MCF 10A (cell line): ENCODE measurements at regions of chr20 and their contacts with region 1.

Region 1: GRCh38 chr20:60057123-60057801 is 99.0 kb downstream of the CDH26 start:
- DNase-seq: peak; percentile 73
- H3K4me3 Mint-ChIP-seq: no peak overlapping the region
- H3K27ac Mint-ChIP-seq: no peak overlapping the region
- H3K4me1 Mint-ChIP-seq: peaks cover 24% of the 10 kb centered on the region
- H3K27me3 Mint-ChIP-seq: no peaks in the 10 kb centered on the region
- CTCF ChIP-seq: peak; percentile 83

Region 2: GRCh38 chr20:59857966-59858365 is 199.3 kb before region 1 on chr20:
- CTCF ChIA-PET with region 1: no interaction called
- POLR2A ChIA-PET with region 1: no interaction called
- intact Hi-C with region 1: no loop called
- DNase-seq: no peak
- H3K4me3 Mint-ChIP-seq: no peak overlapping the region
- H3K27ac Mint-ChIP-seq: no peak overlapping the region
- H3K4me1 Mint-ChIP-seq: no peaks in the 10 kb centered on the region
- H3K27me3 Mint-ChIP-seq: no peaks in the 10 kb centered on the region
- CTCF ChIP-seq: no peak

Region 3: GRCh38 chr20:60071965-60072364 is 14.7 kb after region 1 on chr20:
- CTCF ChIA-PET with region 1: interaction called, 26 read pairs
- POLR2A ChIA-PET with region 1: interaction called, 4 read pairs
- intact Hi-C with region 1: no loop called
- DNase-seq: peak; percentile 78
- H3K4me3 Mint-ChIP-seq: no peak overlapping the region
- H3K27ac Mint-ChIP-seq: no peak overlapping the region
- H3K4me1 Mint-ChIP-seq: peaks cover 7% of the 10 kb centered on the region
- H3K27me3 Mint-ChIP-seq: peaks cover 55% of the 10 kb centered on the region
- CTCF ChIP-seq: no peak

Region 4: DNA sequence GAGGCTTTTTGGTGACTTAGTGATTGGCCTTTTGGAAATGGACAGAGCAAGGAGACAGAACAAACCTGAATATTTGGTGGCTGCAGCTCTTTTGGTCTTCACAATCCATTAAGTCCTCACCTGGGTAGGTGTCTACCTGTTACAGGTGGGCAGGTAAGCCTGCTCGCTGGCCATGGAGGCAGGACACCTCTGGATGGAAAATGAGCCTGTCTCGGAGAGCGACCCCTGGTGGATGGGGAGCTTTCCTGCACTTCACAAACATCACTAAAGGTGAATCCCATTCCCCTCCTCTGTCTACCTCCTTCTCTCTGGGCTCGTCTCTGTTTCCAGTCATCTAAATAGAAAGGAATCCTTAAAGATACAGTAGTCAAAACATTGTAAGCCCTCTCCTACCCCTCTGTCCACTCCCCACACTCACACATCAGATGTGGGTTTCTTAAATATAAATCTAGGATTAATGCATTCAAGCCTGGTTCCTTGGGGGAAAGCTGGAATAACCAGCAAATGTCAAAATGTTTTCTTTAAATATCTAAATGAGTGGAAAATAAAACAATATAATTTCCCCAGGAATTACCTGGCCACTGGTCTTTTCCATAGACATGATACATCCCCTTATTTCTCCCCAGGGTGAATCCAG is 205.8 kb after region 1 on chr20:
- CTCF ChIA-PET with region 1: interaction called, 45 read pairs
- POLR2A ChIA-PET with region 1: no interaction called
- intact Hi-C with region 1: loop called (anchors 1 kb)
- DNase-seq: peak; percentile 72
- H3K4me3 Mint-ChIP-seq: no peak overlapping the region
- H3K27ac Mint-ChIP-seq: no peak overlapping the region
- H3K4me1 Mint-ChIP-seq: no peaks in the 10 kb centered on the region
- H3K27me3 Mint-ChIP-seq: peaks cover 39% of the 10 kb centered on the region
- CTCF ChIP-seq: peak; percentile 84

Region 5: GRCh38 chr20:60345119-60345518 is 287.9 kb after region 1 on chr20:
- CTCF ChIA-PET with region 1: no interaction called
- POLR2A ChIA-PET with region 1: no interaction called
- intact Hi-C with region 1: no loop called
- DNase-seq: no peak
- H3K4me3 Mint-ChIP-seq: no peak overlapping the region
- H3K27ac Mint-ChIP-seq: no peak overlapping the region
- H3K4me1 Mint-ChIP-seq: no peaks in the 10 kb centered on the region
- H3K27me3 Mint-ChIP-seq: peaks cover 14% of the 10 kb centered on the region
- CTCF ChIP-seq: no peak

Region 6: DNA sequence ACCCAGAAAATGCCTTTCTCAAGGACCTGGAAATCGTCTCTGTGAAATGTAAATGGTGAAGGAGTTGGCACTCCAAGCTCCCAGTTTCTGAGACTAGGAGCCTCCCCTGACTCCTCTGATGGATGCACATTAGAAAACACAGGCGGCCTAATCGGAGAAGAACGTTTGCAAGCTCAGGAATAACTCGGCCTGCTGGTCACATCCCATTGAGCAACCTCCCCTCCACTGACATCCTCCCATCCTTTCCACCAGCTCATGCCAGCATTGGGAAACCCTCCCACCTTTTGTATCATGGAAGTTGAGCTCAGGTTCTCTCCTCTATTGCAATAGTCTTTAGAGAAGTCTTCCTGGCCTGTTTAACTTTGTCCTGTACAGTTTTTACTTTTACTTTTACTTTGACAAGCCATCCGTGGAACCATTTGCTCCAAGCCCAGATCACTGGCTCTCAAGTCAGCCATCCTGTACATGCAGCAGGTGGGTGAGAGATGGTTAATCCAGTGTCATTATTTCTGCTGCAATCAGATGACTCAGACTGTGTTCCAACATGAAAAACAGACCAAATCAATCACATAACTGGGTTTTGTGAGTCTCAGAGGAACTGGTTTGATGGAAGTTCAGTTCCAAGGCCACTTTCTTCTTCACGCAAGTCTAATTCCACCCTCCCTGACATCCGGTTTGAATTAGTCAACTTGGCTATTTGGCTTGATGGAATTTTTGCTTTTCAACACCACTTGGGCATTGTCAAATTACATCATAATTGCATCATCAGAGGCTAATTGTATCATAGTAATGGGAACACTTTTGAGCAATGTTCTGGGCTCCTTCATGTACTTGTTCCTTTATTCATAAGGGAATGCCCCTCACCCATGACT is 575.4 kb after region 1 on chr20:
- CTCF ChIA-PET with region 1: no interaction called
- POLR2A ChIA-PET with region 1: no interaction called
- intact Hi-C with region 1: no loop called
- DNase-seq: no peak
- H3K4me3 Mint-ChIP-seq: no peak overlapping the region
- H3K27ac Mint-ChIP-seq: no peak overlapping the region
- H3K4me1 Mint-ChIP-seq: no peaks in the 10 kb centered on the region
- H3K27me3 Mint-ChIP-seq: peaks cover 66% of the 10 kb centered on the region
- CTCF ChIP-seq: no peak

Region 7: GRCh38 chr20:61253264-61253639 is 1196.0 kb after region 1 on chr20:
- CTCF ChIA-PET with region 1: interaction called, 10 read pairs
- POLR2A ChIA-PET with region 1: no interaction called
- intact Hi-C with region 1: no loop called
- DNase-seq: peak; percentile 41
- H3K4me3 Mint-ChIP-seq: peak overlapping the region; percentile 68
- H3K27ac Mint-ChIP-seq: no peak overlapping the region
- H3K4me1 Mint-ChIP-seq: peaks cover 16% of the 10 kb centered on the region
- H3K27me3 Mint-ChIP-seq: peaks cover 7% of the 10 kb centered on the region
- CTCF ChIP-seq: peak; percentile 26